ENCODE measurements at regions of chr11 and their contacts with region 1.

Region 1: GRCh38 chr11:117426269-117426685 is 98.6 kb downstream of the CEP164 start:
- DNase-seq: peak; percentile 96
- ATAC-seq: peak; percentile 79
- H3K4me3 Mint-ChIP-seq: peak overlapping the region; percentile 16; the same call in 1 of the 2 replicates
- H3K27ac Mint-ChIP-seq: no peak overlapping the region
- H3K4me1 Mint-ChIP-seq: peaks cover 20% of the 10 kb centered on the region
- H3K27me3 Mint-ChIP-seq: peaks cover 3% of the 10 kb centered on the region; the same call in 1 of the 2 replicates
- CTCF ChIP-seq: peak; percentile 95

Region 2: GRCh38 chr11:117281159-117281558 is 145.1 kb before region 1 on chr11:
- CTCF ChIA-PET with region 1: no interaction called
- POLR2A ChIA-PET with region 1: no interaction called
- DNase-seq: no peak
- ATAC-seq: no peak
- H3K4me3 Mint-ChIP-seq: no peak overlapping the region
- H3K27ac Mint-ChIP-seq: no peak overlapping the region
- H3K4me1 Mint-ChIP-seq: no peaks in the 10 kb centered on the region
- H3K27me3 Mint-ChIP-seq: no peaks in the 10 kb centered on the region
- CTCF ChIP-seq: no peak

Region 3: DNA sequence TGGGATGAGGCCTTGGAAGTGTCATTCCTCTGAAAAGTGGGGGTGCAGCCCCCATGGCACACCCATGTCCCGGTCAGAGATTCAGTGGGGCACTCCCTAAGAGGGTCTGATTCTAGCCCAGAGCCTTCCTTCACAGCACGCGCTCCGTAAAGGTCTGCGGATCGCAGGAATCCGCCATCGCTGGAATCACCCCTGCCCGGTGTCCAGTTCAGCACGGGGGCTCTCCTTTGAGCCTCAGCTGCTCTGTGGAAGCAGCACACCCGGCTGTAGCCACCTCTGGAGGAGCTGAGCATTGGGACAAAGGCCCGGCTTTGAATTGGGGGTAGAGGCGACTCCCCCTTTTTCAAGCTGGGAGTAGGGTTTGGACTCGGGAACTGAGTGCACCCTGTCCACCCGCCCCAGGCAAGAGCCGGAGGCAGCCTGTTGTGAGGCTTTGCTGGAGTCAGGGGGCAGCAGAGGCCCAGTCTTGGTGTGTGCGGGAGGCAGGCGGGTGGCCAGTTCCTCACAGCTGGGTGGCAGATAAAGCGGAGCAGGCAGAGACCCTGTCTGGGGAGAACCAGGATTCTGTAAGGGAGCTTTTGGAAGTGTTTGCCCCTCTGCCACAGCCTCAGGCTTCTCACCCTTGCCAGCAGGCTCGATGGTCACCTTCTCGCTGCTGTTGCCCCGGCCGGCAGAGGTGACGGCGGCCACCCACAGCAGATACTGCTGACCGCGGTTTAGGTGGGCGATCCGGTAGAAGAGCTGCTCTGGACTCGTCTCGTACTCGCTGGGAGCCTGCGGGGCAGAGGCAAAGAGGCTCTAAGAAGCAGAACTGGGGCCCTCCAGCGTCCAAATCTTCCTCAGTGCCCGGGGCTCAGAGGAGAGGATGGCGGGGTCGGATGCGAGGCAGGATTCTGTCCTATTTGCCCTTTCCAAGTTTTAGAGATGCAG is 17.3 kb after region 1 on chr11:
- CTCF ChIA-PET with region 1: interaction called, 84 read pairs
- POLR2A ChIA-PET with region 1: no interaction called
- DNase-seq: peak; percentile 84
- ATAC-seq: peak; percentile 95
- H3K4me3 Mint-ChIP-seq: no peak overlapping the region
- H3K27ac Mint-ChIP-seq: no peak overlapping the region
- H3K4me1 Mint-ChIP-seq: peaks cover 7% of the 10 kb centered on the region
- H3K27me3 Mint-ChIP-seq: no peaks in the 10 kb centered on the region
- CTCF ChIP-seq: peak; percentile 56; the same call in 1 of the 2 replicates

Region 4: GRCh38 chr11:117492578-117493251 is 66.4 kb after region 1 on chr11:
- CTCF ChIA-PET with region 1: interaction called, 29 read pairs
- POLR2A ChIA-PET with region 1: no interaction called
- DNase-seq: peak; percentile 59
- ATAC-seq: peak; percentile 79
- H3K4me3 Mint-ChIP-seq: no peak overlapping the region
- H3K27ac Mint-ChIP-seq: no peak overlapping the region
- H3K4me1 Mint-ChIP-seq: peaks cover 21% of the 10 kb centered on the region
- H3K27me3 Mint-ChIP-seq: no peaks in the 10 kb centered on the region; the same call in 1 of the 2 replicates
- CTCF ChIP-seq: no peak

Region 5: DNA sequence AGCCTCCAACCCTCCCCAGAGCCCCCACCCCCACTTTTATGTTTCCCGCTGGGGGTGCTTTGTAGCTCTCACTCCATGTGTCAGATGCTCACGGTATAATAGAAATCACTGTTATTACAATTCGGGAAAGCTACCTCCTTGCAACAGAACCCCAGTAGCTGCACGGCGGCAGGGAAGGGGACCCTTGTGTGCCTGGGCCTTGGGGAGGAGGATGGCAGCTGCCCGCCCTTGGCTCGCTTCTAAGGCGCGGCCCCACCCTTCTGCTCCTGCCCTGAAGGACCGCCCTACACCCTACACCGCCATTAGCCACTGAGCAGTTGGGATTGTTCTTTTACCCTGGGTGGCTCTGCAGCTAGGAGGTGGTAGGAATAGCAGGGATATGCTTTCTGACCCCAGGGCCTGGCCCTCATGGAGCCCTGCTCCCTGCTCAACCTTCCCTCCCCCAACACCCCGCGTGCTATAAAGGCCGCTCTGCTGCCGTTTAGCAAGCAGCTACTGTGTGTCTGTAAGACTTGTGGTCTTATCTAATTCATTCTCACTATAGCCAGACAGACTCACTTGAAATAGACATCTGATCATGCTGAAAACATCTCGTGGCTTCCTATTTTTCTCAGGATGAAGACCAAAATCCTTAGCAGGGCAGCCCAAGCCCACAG is 121.0 kb after region 1 on chr11:
- CTCF ChIA-PET with region 1: interaction called, 22 read pairs
- POLR2A ChIA-PET with region 1: no interaction called
- DNase-seq: no peak
- ATAC-seq: peak; percentile 87
- H3K4me3 Mint-ChIP-seq: no peak overlapping the region
- H3K27ac Mint-ChIP-seq: no peak overlapping the region
- H3K4me1 Mint-ChIP-seq: peaks cover 33% of the 10 kb centered on the region
- H3K27me3 Mint-ChIP-seq: peaks cover 16% of the 10 kb centered on the region; the same call in 1 of the 2 replicates
- CTCF ChIP-seq: no peak

Region 6: GRCh38 chr11:117631336-117632140 is 205.3 kb after region 1 on chr11:
- CTCF ChIA-PET with region 1: interaction called, 17 read pairs
- POLR2A ChIA-PET with region 1: no interaction called
- DNase-seq: no peak
- ATAC-seq: no peak
- H3K4me3 Mint-ChIP-seq: no peak overlapping the region
- H3K27ac Mint-ChIP-seq: 0 out of 2 replicates have a peak overlapping the region, but pooled peaks have one; percentile 6
- H3K4me1 Mint-ChIP-seq: peaks cover 16% of the 10 kb centered on the region
- H3K27me3 Mint-ChIP-seq: no peaks in the 10 kb centered on the region; the same call in none of the 2 replicates
- CTCF ChIP-seq: no peak

Region 7: GRCh38 chr11:117817368-117818040 is 391.2 kb after region 1 on chr11:
- CTCF ChIA-PET with region 1: interaction called, 116 read pairs
- POLR2A ChIA-PET with region 1: no interaction called
- DNase-seq: peak; percentile 89
- ATAC-seq: peak; percentile 33
- H3K4me3 Mint-ChIP-seq: peak overlapping the region; percentile 48
- H3K27ac Mint-ChIP-seq: no peak overlapping the region
- H3K4me1 Mint-ChIP-seq: peaks cover 56% of the 10 kb centered on the region
- H3K27me3 Mint-ChIP-seq: peaks cover 5% of the 10 kb centered on the region; the same call in 1 of the 2 replicates
- CTCF ChIP-seq: peak; percentile 99